ENCODE measurements at regions of chr16 and their contacts with region 1.

Region 1: DNA sequence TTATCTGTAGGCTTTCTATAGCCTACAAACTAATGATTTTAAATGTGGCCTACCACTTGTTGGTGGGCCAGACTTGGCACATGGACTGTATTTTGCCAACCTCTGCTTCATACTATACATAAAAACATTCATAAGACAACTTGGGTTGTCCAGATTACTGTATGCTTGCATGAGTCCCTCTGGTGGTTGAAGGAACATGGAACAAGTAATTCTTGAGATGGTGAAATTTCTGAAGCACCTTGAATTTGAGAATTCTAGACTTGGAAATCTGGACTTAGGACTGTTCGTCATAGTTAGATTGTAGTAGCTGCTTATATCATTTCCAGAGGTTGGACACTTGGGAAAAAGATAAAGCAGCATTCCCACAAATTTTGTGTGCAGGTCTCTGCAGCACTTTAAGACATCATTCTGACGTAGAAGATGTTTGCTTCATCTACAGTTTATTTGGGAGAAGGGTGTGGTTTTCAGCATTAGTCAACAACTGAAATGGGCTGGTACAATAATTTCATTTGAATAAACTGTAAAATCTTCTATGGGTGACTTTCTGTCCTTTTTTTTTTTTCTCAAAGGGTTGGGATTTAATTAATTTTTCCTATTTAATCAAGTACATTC is 31.2 kb downstream of the NFATC3 start:
- DNase-seq: peak; percentile 54
- ATAC-seq: peak; percentile 31
- H3K4me3 ChIP-seq: no peak overlapping the region
- H3K4me3 Mint-ChIP-seq: no peak overlapping the region
- H3K27ac ChIP-seq: peak overlapping the region in 1 of 2 donors; percentile 73
- H3K27ac Mint-ChIP-seq: peak overlapping the region; percentile 67
- H3K4me1 ChIP-seq: peaks cover 64 to 73% of the 10 kb centered on the region in 2 donors
- H3K4me1 Mint-ChIP-seq: peaks cover 74% of the 10 kb centered on the region
- H3K27me3 ChIP-seq: no peaks in the 10 kb centered on the region
- H3K27me3 Mint-ChIP-seq: no peaks in the 10 kb centered on the region
- CTCF ChIP-seq: peak; percentile 77

Region 2: DNA sequence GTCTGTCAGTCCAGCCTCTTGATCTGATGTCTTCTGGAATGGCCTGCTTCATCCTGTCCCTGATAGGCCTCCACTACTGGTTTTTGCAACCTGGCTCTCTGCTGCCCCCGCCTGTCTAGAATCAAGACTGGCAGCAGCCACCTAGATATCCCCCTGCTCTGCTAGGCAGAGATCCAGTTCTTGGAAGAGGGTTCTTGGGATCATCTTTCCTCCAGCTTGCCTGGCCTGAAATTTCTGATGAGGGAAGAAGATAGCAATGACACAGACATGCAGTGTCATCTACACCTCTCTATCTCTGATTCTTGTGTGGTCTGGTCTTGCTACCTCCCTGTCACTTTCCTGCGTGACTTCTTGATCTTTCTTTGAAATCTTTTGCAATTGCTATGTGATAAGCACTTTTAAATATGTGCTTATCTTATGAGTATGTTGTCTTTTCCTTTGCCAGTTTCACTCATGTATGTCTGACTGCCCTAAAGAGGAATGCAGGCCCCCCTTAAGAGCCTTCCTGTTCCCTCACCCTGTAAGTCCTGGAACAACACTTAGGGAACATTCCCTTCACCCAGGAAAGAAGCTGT is 51.5 kb before region 1 on chr16:
- CTCF ChIA-PET with region 1: interaction called, 17 read pairs
- POLR2A ChIA-PET with region 1: interaction called, 5 read pairs
- intact Hi-C with region 1: loop called (anchors 1 kb)
- DNase-seq: peak; percentile 74
- ATAC-seq: peak; percentile 93
- H3K4me3 ChIP-seq: no peak overlapping the region
- H3K4me3 Mint-ChIP-seq: no peak overlapping the region
- H3K27ac ChIP-seq: no peak overlapping the region
- H3K27ac Mint-ChIP-seq: peak overlapping the region; percentile 33
- H3K4me1 ChIP-seq: peaks cover 9 to 22% of the 10 kb centered on the region in 2 donors
- H3K4me1 Mint-ChIP-seq: peaks cover 23% of the 10 kb centered on the region
- H3K27me3 ChIP-seq: no peaks in the 10 kb centered on the region
- H3K27me3 Mint-ChIP-seq: no peaks in the 10 kb centered on the region
- CTCF ChIP-seq: peak; percentile 90

Region 3: DNA sequence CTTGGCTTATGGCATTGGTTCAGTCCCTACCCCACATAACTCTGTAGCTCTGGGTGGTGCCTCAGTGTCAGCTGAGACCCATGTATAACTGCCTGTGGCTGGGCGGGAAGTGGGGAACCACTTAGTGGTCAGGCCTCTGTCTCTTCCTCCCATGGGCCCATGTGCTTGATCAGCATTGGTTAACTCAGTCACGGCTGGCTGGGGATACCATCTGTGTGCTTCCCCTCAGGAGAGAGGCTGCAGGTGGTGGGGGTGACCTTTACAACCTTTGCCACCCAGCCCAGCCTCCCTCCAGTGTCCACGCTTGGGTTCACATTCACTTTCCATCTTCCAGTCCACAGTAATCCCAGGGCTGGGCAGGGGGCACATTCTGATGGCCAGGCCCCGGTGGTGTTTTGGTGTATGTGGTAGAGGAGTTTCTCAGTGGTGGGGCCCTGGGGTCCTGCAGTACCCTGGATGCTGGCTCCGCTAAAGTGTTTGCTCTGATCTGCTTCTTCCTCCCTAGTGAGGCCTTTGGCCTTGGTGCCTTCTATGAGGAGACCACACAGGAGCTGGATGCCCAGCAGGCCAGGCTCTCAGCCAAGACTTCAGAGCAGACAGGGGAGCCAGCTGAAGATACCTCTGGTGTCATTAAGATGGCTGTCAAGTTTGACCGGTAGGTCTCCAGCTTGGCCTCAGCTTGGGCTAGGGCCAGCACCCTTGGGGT is 41.4 kb before region 1 on chr16:
- CTCF ChIA-PET with region 1: interaction called, 17 read pairs
- POLR2A ChIA-PET with region 1: no interaction called
- intact Hi-C with region 1: loop called (anchors 1 kb)
- DNase-seq: peak; percentile 93
- ATAC-seq: peak; percentile 86
- H3K4me3 ChIP-seq: peak overlapping the region in 4 of 5 experiments; percentile 11 to 48 (median 30)
- H3K4me3 Mint-ChIP-seq: peak overlapping the region; percentile 85
- H3K27ac ChIP-seq: peak overlapping the region; percentile 77 to 91
- H3K27ac Mint-ChIP-seq: peak overlapping the region; percentile 94
- H3K4me1 ChIP-seq: peaks cover 88 to 99% of the 10 kb centered on the region in 2 donors
- H3K4me1 Mint-ChIP-seq: peaks cover 87% of the 10 kb centered on the region
- H3K27me3 ChIP-seq: no peaks in the 10 kb centered on the region
- H3K27me3 Mint-ChIP-seq: no peaks in the 10 kb centered on the region
- CTCF ChIP-seq: no peak

Region 4: GRCh38 chr16:68093816-68094613 is 22.3 kb before region 1 on chr16:
- CTCF ChIA-PET with region 1: interaction called, 12 read pairs
- POLR2A ChIA-PET with region 1: no interaction called
- intact Hi-C with region 1: loop called (anchors 1 kb)
- DNase-seq: peak; percentile 51
- ATAC-seq: peak; percentile 75
- H3K4me3 ChIP-seq: no peak overlapping the region
- H3K4me3 Mint-ChIP-seq: peak overlapping the region; percentile 46
- H3K27ac ChIP-seq: peak overlapping the region; percentile 22 to 54
- H3K27ac Mint-ChIP-seq: peak overlapping the region; percentile 70
- H3K4me1 ChIP-seq: peaks cover 60 to 77% of the 10 kb centered on the region in 2 donors
- H3K4me1 Mint-ChIP-seq: peaks cover 78% of the 10 kb centered on the region
- H3K27me3 ChIP-seq: no peaks in the 10 kb centered on the region
- H3K27me3 Mint-ChIP-seq: no peaks in the 10 kb centered on the region
- CTCF ChIP-seq: peak; percentile 70

Region 5: DNA sequence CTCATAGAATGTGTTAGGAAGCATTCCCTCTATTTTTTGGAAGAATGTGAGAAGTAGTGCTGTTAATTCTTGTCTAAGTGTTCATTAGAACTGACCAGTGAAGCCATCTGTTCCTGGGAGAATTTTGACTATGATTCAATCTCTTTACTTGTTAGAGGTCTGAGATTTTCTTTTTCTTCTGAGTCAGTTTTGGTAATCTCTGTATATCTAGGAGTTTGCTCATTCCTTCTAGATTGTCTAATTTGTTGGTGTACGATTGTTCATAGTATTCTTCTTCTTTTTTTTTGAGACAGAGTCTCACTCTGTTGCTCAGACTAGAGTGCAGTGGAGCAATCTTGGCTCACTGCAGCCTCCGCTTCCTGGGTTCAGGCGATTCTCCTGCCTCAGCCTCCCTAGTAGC is 10.8 kb before region 1 on chr16:
- CTCF ChIA-PET with region 1: interaction called, 3 read pairs
- POLR2A ChIA-PET with region 1: no interaction called
- intact Hi-C with region 1: loop called (anchors 2 kb)
- DNase-seq: no peak
- ATAC-seq: no peak
- H3K4me3 ChIP-seq: no peak overlapping the region
- H3K4me3 Mint-ChIP-seq: no peak overlapping the region
- H3K27ac ChIP-seq: peak overlapping the region in 1 of 2 donors; percentile 13
- H3K27ac Mint-ChIP-seq: peak overlapping the region; percentile 33
- H3K4me1 ChIP-seq: peaks cover 12 to 37% of the 10 kb centered on the region in 2 donors
- H3K4me1 Mint-ChIP-seq: peaks cover 72% of the 10 kb centered on the region
- H3K27me3 ChIP-seq: no peaks in the 10 kb centered on the region
- H3K27me3 Mint-ChIP-seq: no peaks in the 10 kb centered on the region
- CTCF ChIP-seq: no peak

Measured in B cell (primary cell).